Activated naive CD4-positive, alpha-beta T cell treated with anti-CD3 and anti-CD28 coated beads, Interleukin-2, amount 10 ng/mL, durations not matched to agents 7 days and 5 days (primary cell): ENCODE measurements at regions of chr2 and their contacts with region 1.

Region 1: DNA sequence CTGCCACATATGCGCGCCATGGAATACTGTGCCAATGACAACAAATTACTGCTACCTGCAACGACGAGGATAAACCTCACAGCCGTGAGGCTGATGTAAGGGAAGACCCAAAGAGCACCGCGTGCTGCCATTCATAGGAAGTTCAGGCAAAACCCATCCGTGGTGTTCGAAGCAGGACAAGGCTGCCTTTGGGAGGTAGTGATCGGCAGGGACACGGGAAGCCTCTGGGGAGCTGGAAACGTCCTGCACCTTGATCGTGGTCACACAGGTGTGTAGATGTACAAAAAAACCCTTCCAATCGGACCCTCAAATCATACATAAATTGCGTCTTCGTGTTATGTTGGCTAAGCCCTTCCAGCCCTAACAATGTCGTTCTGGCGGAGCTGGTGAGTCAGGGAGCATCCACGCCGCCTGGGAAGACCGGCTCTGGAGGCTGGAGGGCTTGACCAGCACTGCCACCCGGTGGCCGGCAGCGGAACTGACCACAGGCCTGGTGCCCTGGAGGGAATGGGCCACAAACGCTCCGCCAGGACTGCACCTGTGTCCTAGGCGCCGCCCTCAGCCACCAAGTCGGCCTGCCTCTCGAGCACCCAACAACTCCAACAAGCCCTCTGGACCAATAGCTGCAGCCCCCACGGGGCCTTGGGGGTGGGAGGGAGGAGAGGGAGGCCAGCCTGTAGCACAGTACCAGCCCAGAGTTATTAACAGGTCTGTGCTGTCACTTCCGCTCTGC is 4.1 kb upstream of the NEURL3 start:
- DNase-seq: peak; percentile 73
- H3K4me3 Mint-ChIP-seq: peak overlapping the region; percentile 33
- H3K27ac Mint-ChIP-seq: no peak overlapping the region
- H3K4me1 Mint-ChIP-seq: peaks cover 20% of the 10 kb centered on the region
- H3K27me3 Mint-ChIP-seq: peaks cover 39% of the 10 kb centered on the region

Region 2: GRCh38 chr2:96470636-96471035 is 38.6 kb before region 1 on chr2:
- CTCF ChIA-PET with region 1: interaction called, 12 read pairs
- DNase-seq: peak; percentile 61
- H3K4me3 Mint-ChIP-seq: no peak overlapping the region
- H3K27ac Mint-ChIP-seq: no peak overlapping the region
- H3K4me1 Mint-ChIP-seq: peaks cover 3% of the 10 kb centered on the region
- H3K27me3 Mint-ChIP-seq: peaks cover 13% of the 10 kb centered on the region

Region 3: DNA sequence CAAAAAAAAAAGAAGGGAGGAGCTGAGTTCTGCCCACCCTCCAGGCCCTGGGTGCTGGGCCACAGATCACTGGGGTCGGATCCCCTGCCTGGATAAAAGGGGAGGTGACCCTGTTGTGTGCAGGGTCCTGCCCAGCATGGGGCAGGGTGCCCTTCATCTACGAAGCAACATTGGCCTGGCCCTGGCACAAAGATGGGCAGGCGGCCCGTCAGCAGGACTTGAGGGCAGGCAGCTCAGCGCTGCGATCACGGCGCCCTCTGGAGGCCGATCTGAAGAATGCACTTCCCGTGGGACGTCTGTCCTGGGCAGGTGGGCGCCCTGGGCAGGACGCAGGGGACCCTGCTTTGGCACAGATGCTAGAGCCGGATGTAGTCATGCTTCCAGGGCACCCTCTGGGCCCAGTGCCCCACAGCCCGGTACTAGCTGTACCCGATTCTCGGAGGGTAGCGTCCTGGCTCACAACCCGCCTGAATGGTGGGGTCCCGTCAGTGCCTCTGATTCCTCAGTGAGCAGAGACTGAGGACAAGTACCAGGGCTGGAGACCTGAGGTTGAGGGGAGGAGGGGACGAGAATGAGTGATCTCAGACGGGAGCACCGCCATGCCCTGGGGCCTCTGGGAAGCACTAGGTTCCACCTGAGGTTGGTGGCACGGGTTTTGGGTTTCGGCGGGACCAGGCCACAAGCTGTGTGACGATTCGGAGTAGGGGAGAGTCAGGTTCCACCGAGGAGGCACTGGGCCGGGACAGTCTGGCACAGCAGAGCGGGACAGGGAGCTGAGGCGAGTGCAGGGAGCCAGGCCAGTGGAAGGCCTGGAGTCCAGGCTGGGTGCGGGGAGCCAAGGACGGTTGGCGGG is 45.2 kb after region 1 on chr2:
- CTCF ChIA-PET with region 1: interaction called, 51 read pairs
- DNase-seq: peak; percentile 76
- H3K4me3 Mint-ChIP-seq: peak overlapping the region; percentile 10
- H3K27ac Mint-ChIP-seq: peak overlapping the region; percentile 49
- H3K4me1 Mint-ChIP-seq: peaks cover 26% of the 10 kb centered on the region
- H3K27me3 Mint-ChIP-seq: peaks cover 6% of the 10 kb centered on the region

Region 4: DNA sequence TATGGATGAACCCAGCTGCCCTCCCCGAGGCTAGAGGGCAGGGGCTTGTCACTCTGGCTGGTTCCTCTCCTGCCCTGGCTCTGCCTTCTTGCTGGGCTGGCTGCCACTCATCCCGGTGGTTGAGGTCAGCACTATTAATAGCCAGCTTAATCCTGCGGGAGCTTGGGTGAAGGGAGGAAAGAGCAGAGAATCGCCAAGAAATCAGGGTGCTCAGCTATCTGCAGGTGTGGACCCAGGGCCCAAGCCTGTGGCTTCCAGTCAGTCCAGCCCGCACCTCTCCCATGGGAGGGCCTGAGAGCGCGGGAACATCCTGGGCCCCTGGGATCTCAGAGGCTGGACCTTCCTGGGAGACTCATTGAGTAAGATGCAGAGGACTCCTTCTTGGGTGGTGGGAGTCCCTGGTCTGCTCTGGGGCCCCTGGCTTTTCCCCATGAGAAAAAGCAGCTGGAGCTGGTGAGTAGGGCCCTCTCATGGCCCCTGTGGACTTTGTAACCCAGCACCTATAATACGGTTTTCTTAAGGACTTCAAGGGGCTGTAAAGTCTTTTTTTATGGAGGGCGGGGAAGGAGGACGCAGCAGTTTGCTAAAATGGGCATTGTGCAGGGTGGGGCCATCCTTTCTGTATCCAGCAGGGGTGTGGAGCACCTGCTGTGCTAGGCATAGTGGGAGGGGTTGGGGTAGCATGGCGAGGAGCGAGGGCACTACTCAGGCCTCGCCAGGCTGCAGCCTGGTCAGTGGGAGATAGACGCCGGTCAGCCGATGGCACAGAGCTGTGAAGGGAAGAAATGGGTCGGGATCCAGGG is 279.4 kb after region 1 on chr2:
- CTCF ChIA-PET with region 1: no interaction called
- DNase-seq: no peak
- H3K4me3 Mint-ChIP-seq: no peak overlapping the region
- H3K27ac Mint-ChIP-seq: no peak overlapping the region
- H3K4me1 Mint-ChIP-seq: no peaks in the 10 kb centered on the region
- H3K27me3 Mint-ChIP-seq: no peaks in the 10 kb centered on the region